ENCODE measurements at regions of chr3 and their contacts with region 1.

Region 1: DNA sequence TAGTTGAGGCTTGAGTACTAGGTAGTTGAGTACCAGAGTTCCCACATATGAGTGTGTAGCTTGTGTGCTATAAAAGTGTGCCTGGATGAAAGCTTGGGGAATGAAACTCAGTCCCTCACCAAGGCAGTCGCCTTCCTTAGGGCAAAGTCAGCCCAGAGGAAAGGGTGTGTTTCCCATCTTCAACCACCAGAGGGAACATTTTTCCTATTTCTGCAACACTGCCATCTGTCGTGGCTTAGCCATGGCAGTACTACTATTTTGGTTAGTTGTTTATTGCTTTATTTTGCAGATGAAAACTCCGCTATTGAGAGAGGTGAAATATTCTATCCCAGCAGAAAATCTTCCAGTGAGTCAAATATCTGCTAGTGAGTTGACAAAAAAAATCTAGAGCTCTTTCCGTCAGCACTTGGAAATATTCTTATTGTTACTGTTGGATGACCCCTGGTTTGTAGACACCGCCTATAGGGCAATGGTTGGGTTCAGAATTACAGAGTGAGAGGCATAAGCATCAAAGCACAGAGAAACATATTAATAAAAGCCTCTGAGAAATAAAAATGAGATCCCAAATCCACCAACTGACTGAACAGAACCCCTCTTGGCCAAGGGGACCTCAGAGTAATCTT is 239.9 kb downstream of the CPNE4 start:
- DNase-seq: no peak
- H3K4me3 ChIP-seq: no peak overlapping the region
- H3K27ac ChIP-seq: no peak overlapping the region
- H3K4me1 ChIP-seq: peaks cover 48% of the 10 kb centered on the region
- H3K27me3 ChIP-seq: no peaks in the 10 kb centered on the region
- CTCF ChIP-seq: peak; percentile 86

Region 2: GRCh38 chr3:130787422-130788068 is 1007.3 kb before region 1 on chr3:
- intact Hi-C with region 1: no loop called
- DNase-seq: no peak
- H3K4me3 ChIP-seq: no peak overlapping the region
- H3K27ac ChIP-seq: no peak overlapping the region
- H3K4me1 ChIP-seq: peaks cover 9% of the 10 kb centered on the region
- H3K27me3 ChIP-seq: peaks cover 5% of the 10 kb centered on the region
- CTCF ChIP-seq: no peak

Region 3: DNA sequence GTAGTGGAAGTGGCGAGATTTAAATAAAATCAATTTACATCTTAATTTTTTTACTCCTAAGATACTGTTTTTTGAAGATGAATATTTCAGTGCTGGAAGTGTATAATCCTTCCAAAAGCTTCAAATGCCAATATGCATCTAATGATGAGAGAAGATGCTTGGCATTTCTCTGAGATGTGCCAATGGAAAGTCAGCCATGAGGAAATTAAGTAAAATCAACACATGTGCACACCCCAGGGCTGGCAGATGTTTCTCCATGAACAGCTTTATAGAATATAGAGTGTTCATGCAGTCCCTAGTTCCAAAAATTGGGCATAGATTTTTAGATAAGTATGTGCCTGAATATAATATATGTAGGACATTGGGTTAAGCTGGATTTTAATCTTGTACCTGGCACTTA is 149.8 kb after region 1 on chr3:
- intact Hi-C with region 1: no loop called
- DNase-seq: no peak
- H3K4me3 ChIP-seq: no peak overlapping the region
- H3K27ac ChIP-seq: no peak overlapping the region
- H3K4me1 ChIP-seq: no peaks in the 10 kb centered on the region
- H3K27me3 ChIP-seq: no peaks in the 10 kb centered on the region
- CTCF ChIP-seq: no peak

Region 4: DNA sequence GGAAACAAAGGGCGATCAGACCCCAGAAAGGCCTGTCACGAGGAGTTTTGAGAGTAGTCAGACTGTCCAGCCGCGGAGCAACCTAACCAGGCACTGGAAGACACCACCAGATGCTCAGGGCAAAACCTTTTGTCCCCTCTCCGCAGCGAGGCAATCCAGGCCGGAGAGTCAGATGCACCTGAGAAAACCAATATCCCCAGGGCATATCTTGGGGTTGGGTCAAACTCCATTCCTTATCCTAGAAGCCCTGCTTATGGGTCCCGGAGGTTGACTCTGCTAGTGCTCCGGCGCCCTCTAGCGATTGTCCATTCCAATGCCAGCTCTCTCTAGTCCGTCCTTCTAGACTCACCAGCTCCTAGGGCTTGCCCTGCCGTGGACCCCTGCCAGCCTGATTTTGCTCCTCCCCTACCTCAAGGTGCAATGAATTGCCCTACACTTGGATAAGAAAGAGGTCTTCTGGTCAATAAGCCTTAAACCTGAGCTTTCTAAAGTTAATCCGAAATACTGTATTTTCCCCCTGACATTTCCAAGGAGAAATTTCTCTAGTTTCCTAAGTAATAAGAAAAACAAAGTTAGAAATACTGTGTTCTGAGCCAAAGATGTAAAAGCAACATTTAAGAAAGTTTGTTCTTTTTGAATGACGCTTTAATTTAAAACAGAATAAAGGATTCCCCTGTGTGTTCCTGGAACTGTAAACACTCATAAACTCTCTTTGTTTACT is 234.5 kb after region 1 on chr3:
- intact Hi-C with region 1: loop called (anchors 2 kb)
- DNase-seq: peak; percentile 73
- H3K4me3 ChIP-seq: no peak overlapping the region
- H3K27ac ChIP-seq: no peak overlapping the region
- H3K4me1 ChIP-seq: peaks cover 3% of the 10 kb centered on the region
- H3K27me3 ChIP-seq: peaks cover 45% of the 10 kb centered on the region
- CTCF ChIP-seq: peak; percentile 90

Measured in left ventricle myocardium inferior (tissue), 1 donor.